Mammary epithelial cell (primary cell): ENCODE measurements at regions of chr13 and their contacts with region 1.

Region 1: GRCh38 chr13:101144808-101145419 is 271.4 kb downstream of the NALCN start:
- DNase-seq: peak; percentile 30
- H3K4me3 ChIP-seq: no peak overlapping the region
- H3K27ac ChIP-seq: no peak overlapping the region
- H3K4me1 ChIP-seq: no peaks in the 10 kb centered on the region
- H3K27me3 ChIP-seq: no peaks in the 10 kb centered on the region
- CTCF ChIP-seq: peak; percentile 51 to 63

Region 2: DNA sequence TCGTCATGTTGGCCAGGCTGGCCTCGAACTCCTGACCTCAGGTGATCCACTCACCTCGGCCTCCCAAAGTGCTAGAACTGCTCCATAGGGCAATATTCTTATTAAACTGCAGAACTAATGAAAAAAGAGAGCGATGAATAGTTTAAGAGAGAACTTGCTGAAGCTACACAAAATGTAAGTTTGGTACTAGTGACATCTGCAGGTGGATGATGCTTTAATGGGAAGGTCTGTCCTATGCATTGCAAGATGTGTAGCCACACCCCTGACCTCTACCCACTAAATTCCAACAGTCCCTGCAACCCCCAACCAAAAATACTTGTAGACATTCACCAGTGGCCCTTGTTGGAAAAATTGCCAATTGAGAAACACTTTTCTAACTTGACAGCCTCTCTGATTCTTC is 153.6 kb after region 1 on chr13:
- CTCF ChIA-PET with region 1: no interaction called
- dilution Hi-C with region 1: no loop called
- in situ Hi-C with region 1: no loop called
- intact Hi-C with region 1: loop called (anchors 1 kb)
- DNase-seq: no peak
- H3K4me3 ChIP-seq: no peak overlapping the region
- H3K27ac ChIP-seq: no peak overlapping the region
- H3K4me1 ChIP-seq: no peaks in the 10 kb centered on the region
- H3K27me3 ChIP-seq: no peaks in the 10 kb centered on the region
- CTCF ChIP-seq: peak in 1 of 2 donors; percentile 28

Region 3: DNA sequence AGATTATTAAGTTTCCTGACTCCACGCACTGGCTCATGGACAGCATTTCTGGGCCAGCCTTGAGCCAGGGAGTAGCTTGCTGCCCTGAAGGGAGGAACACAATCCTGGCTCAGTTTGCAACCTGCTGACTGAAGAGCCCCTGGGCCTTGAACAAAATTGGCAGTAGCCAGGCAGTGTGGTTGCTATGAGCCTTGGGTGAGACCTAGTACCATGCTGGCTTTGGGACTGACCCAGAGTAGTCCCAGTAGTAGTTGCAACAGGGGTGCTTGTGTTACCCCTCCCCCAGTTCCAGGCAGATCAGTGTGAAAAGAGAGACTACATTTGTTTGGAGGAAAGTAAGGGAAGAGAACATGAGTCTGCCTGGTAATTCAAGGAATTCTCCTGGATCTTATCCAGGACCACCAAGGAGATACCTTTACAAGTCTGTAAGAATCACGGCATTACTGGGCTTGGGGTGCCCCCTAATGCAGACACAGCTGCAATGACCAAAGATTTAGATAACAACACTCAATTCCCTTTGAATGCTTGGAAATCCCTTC is 329.6 kb after region 1 on chr13:
- CTCF ChIA-PET with region 1: interaction called, 7 read pairs
- dilution Hi-C with region 1: no loop called
- in situ Hi-C with region 1: loop called (anchors 5 kb)
- intact Hi-C with region 1: loop called (anchors 1 kb)
- DNase-seq: no peak
- H3K4me3 ChIP-seq: no peak overlapping the region
- H3K27ac ChIP-seq: no peak overlapping the region
- H3K4me1 ChIP-seq: peaks cover 18% of the 10 kb centered on the region
- H3K27me3 ChIP-seq: no peaks in the 10 kb centered on the region
- CTCF ChIP-seq: peak; percentile 40 to 55

Region 4: DNA sequence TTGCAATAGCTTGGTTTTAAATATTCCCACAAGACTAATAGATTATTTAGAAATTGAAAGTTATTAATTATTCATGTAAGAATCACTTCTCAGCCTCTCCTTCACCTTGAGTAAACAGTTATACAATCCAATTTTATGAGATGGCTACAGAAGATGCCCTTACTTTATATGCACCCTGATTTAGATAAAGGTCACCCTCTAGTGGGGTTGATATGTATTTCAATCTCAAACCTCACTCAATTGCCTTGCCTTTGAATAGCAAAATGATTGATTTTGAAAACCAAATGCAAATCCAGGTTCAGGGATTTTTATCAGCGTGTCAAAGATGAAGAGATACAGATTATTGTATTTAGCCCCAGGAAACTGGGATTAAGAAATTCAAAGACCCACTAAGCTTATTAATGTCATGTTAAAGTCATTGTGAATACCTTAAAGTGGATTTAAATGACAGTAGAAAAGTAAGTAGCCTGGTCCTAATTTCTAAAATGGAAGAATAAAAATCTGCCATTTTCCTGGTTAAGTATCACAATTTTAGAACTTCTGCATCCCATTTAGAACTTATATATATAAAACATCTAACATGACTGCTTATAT is 612.6 kb after region 1 on chr13:
- CTCF ChIA-PET with region 1: interaction called, 3 read pairs
- dilution Hi-C with region 1: no loop called
- in situ Hi-C with region 1: loop called (anchors 10 to 25 kb)
- intact Hi-C with region 1: loop called (anchors 1 kb)
- DNase-seq: peak; percentile 42
- H3K4me3 ChIP-seq: no peak overlapping the region
- H3K27ac ChIP-seq: no peak overlapping the region
- H3K4me1 ChIP-seq: no peaks in the 10 kb centered on the region
- H3K27me3 ChIP-seq: peaks cover 4% of the 10 kb centered on the region
- CTCF ChIP-seq: peak; percentile 42 to 63